Activated T-helper 1 cell treated with anti-CD3 and anti-CD28 coated beads, Interleukin-12 subunit alpha, Interleukin-12 subunit beta, Interleukin-2, Interleukin-4 antibody, amounts not matched to agents 30 ng/mL and 10 ng/mL and 1 ng/mL, durations not matched to agents 14 hours and 24 hours and 36 hours (primary cell): ENCODE measurements at regions of chr22 and their contacts with region 1.

Region 1: DNA sequence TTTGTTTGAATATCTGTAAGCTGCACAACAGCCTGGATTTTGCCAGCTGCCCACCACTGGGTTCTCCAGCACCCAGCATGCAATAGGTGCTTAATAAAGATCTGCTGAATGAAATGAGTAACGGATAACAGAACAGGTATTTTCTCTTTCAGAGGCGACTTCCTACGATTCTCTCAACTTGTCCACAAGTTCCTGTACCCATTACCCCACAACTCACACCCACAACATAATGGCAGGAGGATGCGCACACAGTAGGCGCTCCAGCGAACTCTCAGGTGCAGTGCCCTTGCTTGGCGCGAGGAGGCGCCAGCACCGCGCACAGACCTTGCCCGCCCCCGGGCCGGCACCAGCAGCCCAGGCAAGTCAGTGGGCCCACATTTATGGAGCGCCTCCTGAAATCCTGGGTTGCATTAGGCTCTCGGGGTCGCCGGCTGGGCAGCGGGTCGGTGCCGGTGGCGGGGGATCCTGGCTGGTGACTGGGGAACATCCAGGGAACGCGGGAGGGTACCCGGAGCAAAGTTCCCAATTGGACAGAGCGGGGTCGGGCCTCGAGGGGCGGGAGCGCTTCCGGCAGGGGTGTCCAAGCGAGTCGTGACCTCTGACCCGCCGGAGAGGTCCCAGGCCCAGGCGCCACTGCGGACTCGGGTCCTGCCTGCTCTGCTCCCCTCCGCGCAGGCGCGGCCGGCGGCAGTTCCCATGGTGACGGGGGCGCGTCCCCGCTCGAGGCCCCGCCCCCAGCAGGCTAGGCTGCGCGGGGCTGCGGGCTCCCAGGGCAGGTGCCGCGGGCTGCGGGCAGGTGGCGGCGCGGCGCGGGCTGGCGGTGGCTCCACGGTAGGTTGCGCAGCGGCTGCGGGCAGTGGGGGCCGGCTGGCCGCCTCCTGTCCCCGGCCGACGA is at the start of gene KIAA1671:
- DNase-seq: peak; percentile 88
- H3K4me3 Mint-ChIP-seq: peak within 1 kb of the TSS; percentile 83
- H3K27ac Mint-ChIP-seq: peak within 1 kb of the TSS; percentile 15
- H3K4me1 Mint-ChIP-seq: peaks cover 31% of the 10 kb centered on the region
- H3K27me3 Mint-ChIP-seq: peaks cover 49% of the 10 kb centered on the region
- total RNA-seq, gene KIAA1671: 16.5 and 17.6 TPM in 2 replicates

Region 2: DNA sequence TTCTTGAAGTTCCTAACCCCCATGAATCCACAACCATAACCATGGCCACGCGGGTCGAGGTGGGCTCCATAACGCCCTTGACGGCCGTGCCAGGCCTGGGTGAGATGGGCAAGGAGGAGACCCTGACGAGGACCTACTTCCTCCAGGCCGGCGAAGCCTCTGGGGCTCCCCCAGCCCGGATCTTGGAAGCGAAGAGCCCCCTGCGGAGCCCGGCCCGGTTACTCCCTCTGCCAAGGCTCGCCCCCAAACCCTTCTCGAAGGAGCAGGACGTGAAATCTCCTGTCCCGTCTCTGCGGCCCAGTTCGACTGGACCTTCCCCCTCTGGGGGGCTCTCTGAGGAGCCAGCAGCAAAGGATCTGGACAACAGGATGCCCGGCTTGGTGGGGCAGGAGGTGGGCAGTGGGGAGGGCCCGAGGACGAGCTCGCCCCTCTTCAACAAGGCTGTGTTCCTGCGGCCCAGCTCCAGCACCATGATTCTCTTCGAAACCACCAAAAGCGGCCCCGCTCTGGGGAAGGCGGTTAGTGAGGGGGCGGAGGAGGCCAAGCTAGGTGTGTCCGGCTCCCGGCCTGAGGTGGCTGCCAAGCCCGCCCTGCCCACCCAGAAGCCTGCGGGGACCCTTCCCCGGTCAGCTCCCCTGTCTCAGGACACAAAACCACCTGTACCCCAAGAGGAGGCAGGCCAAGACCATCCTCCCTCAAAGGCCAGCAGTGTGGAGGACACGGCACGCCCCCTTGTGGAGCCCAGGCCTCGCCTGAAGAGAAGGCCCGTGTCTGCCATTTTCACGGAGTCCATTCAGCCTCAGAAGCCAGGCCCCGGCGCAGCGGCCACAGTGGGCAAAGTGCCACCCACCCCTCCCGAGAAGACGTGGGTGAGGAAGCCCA is 76.0 kb after region 1 on chr22:
- intact Hi-C with region 1: loop called (anchors 1 kb)
- DNase-seq: no peak
- H3K4me3 Mint-ChIP-seq: no peak overlapping the region
- H3K27ac Mint-ChIP-seq: no peak overlapping the region
- H3K4me1 Mint-ChIP-seq: peaks cover 28% of the 10 kb centered on the region
- H3K27me3 Mint-ChIP-seq: peaks cover 6% of the 10 kb centered on the region

Region 3: GRCh38 chr22:25048659-25049647 is 96.8 kb after region 1 on chr22:
- intact Hi-C with region 1: loop called (anchors 1 kb)
- DNase-seq: peak; percentile 58
- H3K4me3 Mint-ChIP-seq: no peak overlapping the region
- H3K27ac Mint-ChIP-seq: no peak overlapping the region
- H3K4me1 Mint-ChIP-seq: no peaks in the 10 kb centered on the region
- H3K27me3 Mint-ChIP-seq: peaks cover 5% of the 10 kb centered on the region